ENCODE measurements at regions of chr1 and their contacts with region 1.

Region 1: GRCh38 chr1:151006327-151007052 is at the start of gene MINDY1:
- DNase-seq: peak; percentile 53
- ATAC-seq: peak; percentile 25
- H3K4me3 Mint-ChIP-seq: peak within 1 kb of the TSS; percentile 98
- H3K27ac Mint-ChIP-seq: peak within 1 kb of the TSS; percentile 91
- H3K4me1 Mint-ChIP-seq: peaks cover 86% of the 10 kb centered on the region
- H3K27me3 Mint-ChIP-seq: no peaks in the 10 kb centered on the region
- total RNA-seq, gene MINDY1: 9.1 to 9.9 TPM

Region 2: DNA sequence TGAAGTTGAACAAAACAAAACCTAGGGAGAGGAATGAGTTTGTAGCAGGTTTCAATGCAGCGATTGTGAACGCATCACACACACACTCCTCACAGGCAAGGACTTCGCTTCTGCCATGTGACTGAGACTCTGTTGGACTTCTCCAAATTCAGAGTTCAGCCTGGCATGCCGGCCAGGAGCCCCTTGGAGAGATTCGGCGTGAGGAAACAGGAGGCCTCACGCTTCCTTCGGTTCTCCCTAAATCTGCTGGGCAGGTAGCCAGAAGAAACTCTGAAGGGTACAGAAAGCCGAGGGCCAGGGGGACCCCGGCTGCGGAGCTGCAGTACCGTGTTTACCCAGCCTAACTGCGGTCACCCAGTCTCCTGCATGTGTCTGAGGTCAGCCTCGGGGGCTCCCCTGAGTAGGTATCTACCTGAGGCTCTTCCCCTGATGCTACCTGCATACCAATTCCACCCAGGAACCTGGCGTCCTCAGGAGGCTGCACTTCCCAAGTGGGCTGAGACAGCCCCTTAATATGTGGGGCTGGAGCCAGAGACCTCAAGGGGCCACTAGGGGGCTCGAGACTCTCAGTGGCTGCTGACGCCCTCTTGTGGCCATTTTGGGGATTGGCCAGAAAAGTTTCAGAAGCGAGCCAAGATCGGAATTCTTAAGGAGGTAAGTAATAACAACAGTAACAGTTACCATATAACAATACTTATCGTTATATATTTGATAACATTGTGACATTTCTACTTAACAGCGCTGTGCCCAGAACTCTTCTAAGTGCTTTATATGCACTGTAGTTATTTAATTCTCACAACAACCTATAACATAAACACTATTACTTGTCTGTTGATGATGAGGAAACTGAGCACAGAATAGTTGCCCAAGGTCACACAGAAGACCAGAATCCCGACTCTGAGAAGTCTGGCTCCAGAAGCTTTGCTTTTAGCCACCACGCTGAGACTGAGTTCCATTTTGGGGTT is 27.1 kb before region 1 on chr1:
- CTCF ChIA-PET with region 1: interaction called, 164 read pairs
- POLR2A ChIA-PET with region 1: interaction called, 5 read pairs
- DNase-seq: peak; percentile 93
- ATAC-seq: peak; percentile 66
- H3K4me3 Mint-ChIP-seq: peak overlapping the region; percentile 43
- H3K27ac Mint-ChIP-seq: peak overlapping the region; percentile 27
- H3K4me1 Mint-ChIP-seq: peaks cover 46% of the 10 kb centered on the region
- H3K27me3 Mint-ChIP-seq: no peaks in the 10 kb centered on the region

Region 3: DNA sequence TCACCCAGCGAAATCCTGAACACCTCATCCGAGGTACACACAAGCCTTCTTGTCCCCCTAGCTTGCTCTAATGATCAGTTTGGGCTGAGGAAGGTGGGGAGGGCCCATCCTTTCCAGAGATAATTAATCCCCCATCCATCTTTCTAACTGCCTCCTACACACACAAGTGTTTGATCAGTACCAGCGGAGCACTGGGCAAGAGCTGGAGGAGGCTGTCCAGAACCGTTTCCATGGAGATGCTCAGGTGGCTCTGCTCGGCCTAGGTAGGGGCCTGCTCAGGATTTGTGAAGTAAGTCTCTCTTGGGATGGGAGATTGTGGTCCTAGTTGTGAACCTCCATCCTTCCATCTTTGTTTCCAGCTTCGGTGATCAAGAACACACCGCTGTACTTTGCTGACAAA is 18.6 kb before region 1 on chr1:
- CTCF ChIA-PET with region 1: interaction called, 164 read pairs
- POLR2A ChIA-PET with region 1: no interaction called
- DNase-seq: no peak
- ATAC-seq: peak; percentile 24
- H3K4me3 Mint-ChIP-seq: no peak overlapping the region
- H3K27ac Mint-ChIP-seq: peak overlapping the region; percentile 49
- H3K4me1 Mint-ChIP-seq: peaks cover 12% of the 10 kb centered on the region
- H3K27me3 Mint-ChIP-seq: no peaks in the 10 kb centered on the region

Region 4: GRCh38 chr1:150995896-150996295 is 10.6 kb before region 1 on chr1:
- CTCF ChIA-PET with region 1: interaction called, 94 read pairs
- POLR2A ChIA-PET with region 1: interaction called, 4 read pairs
- DNase-seq: peak; percentile 51
- ATAC-seq: peak; percentile 38
- H3K4me3 Mint-ChIP-seq: no peak overlapping the region
- H3K27ac Mint-ChIP-seq: no peak overlapping the region
- H3K4me1 Mint-ChIP-seq: peaks cover 20% of the 10 kb centered on the region
- H3K27me3 Mint-ChIP-seq: no peaks in the 10 kb centered on the region

Region 5: GRCh38 chr1:151059078-151059907 is 52.8 kb after region 1 on chr1 and contains the start of gene CDC42SE1:
- CTCF ChIA-PET with region 1: interaction called, 18 read pairs
- POLR2A ChIA-PET with region 1: interaction called, 4 read pairs
- DNase-seq: peak; percentile 91
- ATAC-seq: peak; percentile 78
- H3K4me3 Mint-ChIP-seq: peak within 1 kb of the TSS; percentile 94
- H3K27ac Mint-ChIP-seq: peak within 1 kb of the TSS; percentile 96
- H3K4me1 Mint-ChIP-seq: peaks cover 56% of the 10 kb centered on the region
- H3K27me3 Mint-ChIP-seq: no peaks in the 10 kb centered on the region
- total RNA-seq, gene CDC42SE1: 238 to 245 TPM

Region 6: GRCh38 chr1:151124763-151125403 is 118.4 kb after region 1 on chr1:
- CTCF ChIA-PET with region 1: no interaction called
- POLR2A ChIA-PET with region 1: no interaction called
- DNase-seq: no peak
- ATAC-seq: no peak
- H3K4me3 Mint-ChIP-seq: no peak overlapping the region
- H3K27ac Mint-ChIP-seq: no peak overlapping the region
- H3K4me1 Mint-ChIP-seq: no peaks in the 10 kb centered on the region
- H3K27me3 Mint-ChIP-seq: no peaks in the 10 kb centered on the region